ENCODE measurements at regions of chrX and their contacts with region 1.

Region 1: GRCh38 chrX:7132335-7133049 is 15.0 kb upstream of the STS start:
- DNase-seq: peak; percentile 86
- H3K4me3 Mint-ChIP-seq: peak overlapping the region; percentile 26
- H3K27ac Mint-ChIP-seq: peak overlapping the region; percentile 78
- H3K4me1 Mint-ChIP-seq: peaks cover 18% of the 10 kb centered on the region
- H3K27me3 Mint-ChIP-seq: no peaks in the 10 kb centered on the region
- CTCF ChIP-seq: peak; percentile 67

Region 2: DNA sequence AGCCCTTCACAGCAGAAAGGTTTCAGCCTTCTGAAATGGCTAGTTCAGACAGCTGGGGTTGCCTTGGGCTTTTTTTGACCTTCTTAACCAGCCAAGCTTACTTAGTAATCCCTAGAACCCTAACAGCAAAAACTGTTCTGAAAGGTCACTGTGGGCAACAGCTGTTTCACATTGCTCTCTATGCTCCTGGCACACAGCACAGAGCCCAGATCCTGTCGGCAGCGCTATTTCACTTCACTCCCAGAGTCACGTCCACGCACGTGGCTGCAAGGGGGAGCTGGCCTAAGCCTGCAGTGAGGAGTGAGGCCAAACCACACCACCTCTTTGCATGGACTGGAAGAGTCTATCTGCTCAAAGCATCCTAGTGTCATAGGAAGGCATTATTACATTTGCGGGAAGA is 16.9 kb before region 1 on chrX:
- CTCF ChIA-PET with region 1: interaction called, 10 read pairs
- POLR2A ChIA-PET with region 1: no interaction called
- intact Hi-C with region 1: no loop called
- DNase-seq: no peak
- H3K4me3 Mint-ChIP-seq: no peak overlapping the region
- H3K27ac Mint-ChIP-seq: no peak overlapping the region
- H3K4me1 Mint-ChIP-seq: peaks cover 31% of the 10 kb centered on the region
- H3K27me3 Mint-ChIP-seq: no peaks in the 10 kb centered on the region
- CTCF ChIP-seq: no peak

Region 3: GRCh38 chrX:7147978-7148824 is 15.7 kb after region 1 on chrX and contains the start of gene PUDP:
- CTCF ChIA-PET with region 1: interaction called, 49 read pairs
- POLR2A ChIA-PET with region 1: interaction called, 6 read pairs
- intact Hi-C with region 1: no loop called
- DNase-seq: peak; percentile 84
- H3K4me3 Mint-ChIP-seq: peak within 1 kb of the TSS; percentile 85
- H3K27ac Mint-ChIP-seq: no peak within 1 kb of the TSS
- H3K4me1 Mint-ChIP-seq: peaks cover 13% of the 10 kb centered on the region
- H3K27me3 Mint-ChIP-seq: peaks cover 6% of the 10 kb centered on the region
- CTCF ChIP-seq: no peak
- total RNA-seq, gene PUDP: 14.2 and 16.1 TPM in 2 replicates

Region 4: GRCh38 chrX:7552758-7553157 is 420.3 kb after region 1 on chrX:
- CTCF ChIA-PET with region 1: interaction called, 3 read pairs
- POLR2A ChIA-PET with region 1: no interaction called
- intact Hi-C with region 1: loop called (anchors 1 kb)
- DNase-seq: peak; percentile 3
- H3K4me3 Mint-ChIP-seq: no peak overlapping the region
- H3K27ac Mint-ChIP-seq: no peak overlapping the region
- H3K4me1 Mint-ChIP-seq: no peaks in the 10 kb centered on the region
- H3K27me3 Mint-ChIP-seq: peaks cover 34% of the 10 kb centered on the region
- CTCF ChIP-seq: no peak

Measured in MCF 10A (cell line).